Tibial artery (tissue), 4 donors: ENCODE measurements at regions of chr2 and their contacts with region 1.

Region 1: DNA sequence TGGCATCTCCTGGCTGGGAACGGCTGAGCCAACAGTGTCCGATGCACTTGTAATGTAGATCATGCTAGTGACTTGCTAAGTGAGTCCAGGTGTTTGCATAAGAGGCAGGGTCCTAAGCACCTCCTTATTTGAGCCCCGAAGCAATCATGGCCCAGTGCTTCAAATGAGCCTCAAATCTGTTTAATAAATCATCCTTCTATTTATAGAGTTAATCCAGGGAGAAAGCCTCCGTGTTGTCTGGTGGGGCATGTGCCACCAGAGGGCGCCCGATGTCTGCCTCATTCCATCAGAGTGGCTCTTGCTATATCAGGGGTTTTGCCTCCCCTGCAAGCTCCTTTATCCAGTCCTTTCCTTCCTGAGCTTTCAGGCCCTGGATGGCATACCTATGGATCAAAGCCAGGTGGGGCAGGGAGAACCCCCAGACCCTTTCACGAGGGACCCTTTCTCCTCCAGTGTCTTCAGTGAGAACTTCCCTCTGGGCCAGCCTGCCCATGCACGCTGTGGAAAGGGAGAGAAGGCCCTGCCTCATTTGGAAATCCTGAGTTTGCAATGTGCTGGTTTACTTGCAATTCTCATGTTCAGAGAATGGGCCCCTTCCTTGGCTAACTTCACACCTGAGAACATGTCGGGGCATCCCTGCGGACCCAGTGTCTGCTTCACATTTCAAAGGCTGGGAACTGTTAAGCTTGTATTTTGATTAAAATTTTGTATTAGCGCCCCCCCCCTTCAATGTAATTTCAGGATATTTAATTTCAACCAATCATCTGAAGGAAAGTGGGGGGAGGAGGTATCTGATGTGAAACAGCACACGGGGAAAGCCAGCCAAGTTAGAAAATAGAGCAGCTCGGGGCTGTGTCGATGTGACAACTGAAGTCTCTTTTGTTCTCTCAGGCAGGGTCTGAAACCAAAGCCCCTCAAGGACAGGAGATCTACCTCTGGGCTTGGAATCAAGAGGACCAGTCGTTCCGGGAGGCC is 39.7 kb downstream of the RDH14 start:
- DNase-seq: peak; percentile 88 to 93
- H3K4me3 ChIP-seq: no peak overlapping the region
- H3K27ac ChIP-seq: peak overlapping the region; percentile 70 to 76
- H3K4me1 ChIP-seq: peaks cover 0 to 39% (median 23%) of the 10 kb centered on the region in 4 donors
- H3K27me3 ChIP-seq: no peaks in the 10 kb centered on the region
- CTCF ChIP-seq: peak; percentile 92 to 93

Region 2: DNA sequence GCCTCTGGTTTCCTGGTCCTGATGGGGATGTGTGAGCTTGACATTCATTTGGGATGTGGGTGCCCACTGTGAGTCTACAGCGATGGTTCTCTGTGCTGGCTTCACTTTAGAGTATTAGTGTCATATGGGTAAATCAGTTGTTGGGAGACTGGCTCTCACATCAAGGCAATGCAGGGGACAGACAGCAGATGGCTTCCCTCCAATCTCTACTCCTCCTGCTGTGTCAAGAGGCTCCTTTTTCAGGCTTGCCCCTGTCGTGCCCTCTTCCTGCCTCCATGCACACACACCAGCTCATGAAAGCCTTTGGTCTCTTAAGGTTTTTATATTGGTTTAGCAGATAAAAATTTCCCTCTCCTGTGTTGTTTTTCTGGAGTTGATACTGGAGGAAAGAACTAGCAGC is 275.9 kb before region 1 on chr2:
- intact Hi-C with region 1: no loop called
- DNase-seq: no peak
- H3K4me3 ChIP-seq: no peak overlapping the region
- H3K27ac ChIP-seq: no peak overlapping the region
- H3K4me1 ChIP-seq: no peaks in the 10 kb centered on the region
- H3K27me3 ChIP-seq: no peaks in the 10 kb centered on the region
- CTCF ChIP-seq: no peak

Region 3: DNA sequence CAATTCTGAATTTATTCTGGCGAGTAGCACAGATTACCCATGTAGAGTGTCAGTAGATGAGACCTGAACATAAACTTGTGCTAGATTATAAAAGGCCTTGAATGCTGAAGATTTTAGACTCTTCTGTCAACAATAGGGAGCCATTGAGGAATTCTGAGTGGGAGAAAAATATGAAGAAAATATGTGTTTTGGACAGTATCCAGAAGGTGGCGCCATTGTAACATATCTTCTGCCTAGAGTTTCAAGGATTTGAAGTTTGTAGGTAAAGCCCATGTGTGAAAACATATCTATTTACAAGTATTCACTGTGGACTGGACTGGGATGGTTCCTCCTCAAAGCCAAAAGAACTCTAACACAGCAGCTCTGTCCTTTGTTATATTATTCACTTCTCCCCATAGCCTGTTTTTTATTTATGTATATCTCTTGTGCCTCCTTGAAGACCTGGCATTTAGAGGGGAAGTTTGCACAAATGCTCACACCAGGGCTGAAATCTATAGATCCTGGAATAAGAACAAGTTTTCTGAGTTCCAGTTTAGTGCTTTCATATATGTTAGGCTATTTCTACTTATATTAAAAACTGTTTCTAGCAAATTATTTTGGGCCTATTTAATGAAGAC is 85.2 kb before region 1 on chr2:
- intact Hi-C with region 1: loop called (anchors 5 kb)
- DNase-seq: no peak
- H3K4me3 ChIP-seq: no peak overlapping the region
- H3K27ac ChIP-seq: peak overlapping the region; percentile 16 to 63
- H3K4me1 ChIP-seq: peaks cover 0 to 30% (median 9%) of the 10 kb centered on the region in 4 donors
- H3K27me3 ChIP-seq: no peaks in the 10 kb centered on the region
- CTCF ChIP-seq: peak; percentile 65 to 71

Region 4: GRCh38 chr2:18741895-18742732 is 221.4 kb after region 1 on chr2:
- intact Hi-C with region 1: loop called (anchors 5 kb)
- DNase-seq: peak; percentile 31 to 77
- H3K4me3 ChIP-seq: no peak overlapping the region
- H3K27ac ChIP-seq: peak overlapping the region; percentile 10 to 61
- H3K4me1 ChIP-seq: peaks cover 0 to 15% (median 8%) of the 10 kb centered on the region in 4 donors
- H3K27me3 ChIP-seq: no peaks in the 10 kb centered on the region
- CTCF ChIP-seq: peak; percentile 48 to 53

Region 5: DNA sequence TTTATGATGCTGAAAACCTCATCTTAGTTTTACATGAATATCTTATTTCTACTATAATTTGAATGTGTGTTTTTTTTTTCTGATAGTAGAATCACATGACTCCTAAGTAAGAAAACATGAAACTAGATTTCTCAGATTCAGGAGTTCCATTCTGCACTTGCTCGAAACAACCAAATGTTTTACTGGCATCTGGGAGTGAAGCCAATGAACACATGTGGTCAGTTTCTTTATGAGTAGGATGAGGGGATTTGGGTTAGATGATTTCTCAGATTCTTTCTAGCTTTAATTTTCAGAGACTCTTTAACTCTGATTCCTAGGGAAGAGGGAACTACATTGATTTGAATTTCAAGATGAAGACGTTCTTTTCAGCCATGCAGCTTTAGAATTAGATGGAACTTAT is 293.6 kb after region 1 on chr2:
- intact Hi-C with region 1: no loop called
- DNase-seq: no peak
- H3K4me3 ChIP-seq: no peak overlapping the region
- H3K27ac ChIP-seq: no peak overlapping the region
- H3K4me1 ChIP-seq: no peaks in the 10 kb centered on the region
- H3K27me3 ChIP-seq: no peaks in the 10 kb centered on the region
- CTCF ChIP-seq: no peak

Region 6: DNA sequence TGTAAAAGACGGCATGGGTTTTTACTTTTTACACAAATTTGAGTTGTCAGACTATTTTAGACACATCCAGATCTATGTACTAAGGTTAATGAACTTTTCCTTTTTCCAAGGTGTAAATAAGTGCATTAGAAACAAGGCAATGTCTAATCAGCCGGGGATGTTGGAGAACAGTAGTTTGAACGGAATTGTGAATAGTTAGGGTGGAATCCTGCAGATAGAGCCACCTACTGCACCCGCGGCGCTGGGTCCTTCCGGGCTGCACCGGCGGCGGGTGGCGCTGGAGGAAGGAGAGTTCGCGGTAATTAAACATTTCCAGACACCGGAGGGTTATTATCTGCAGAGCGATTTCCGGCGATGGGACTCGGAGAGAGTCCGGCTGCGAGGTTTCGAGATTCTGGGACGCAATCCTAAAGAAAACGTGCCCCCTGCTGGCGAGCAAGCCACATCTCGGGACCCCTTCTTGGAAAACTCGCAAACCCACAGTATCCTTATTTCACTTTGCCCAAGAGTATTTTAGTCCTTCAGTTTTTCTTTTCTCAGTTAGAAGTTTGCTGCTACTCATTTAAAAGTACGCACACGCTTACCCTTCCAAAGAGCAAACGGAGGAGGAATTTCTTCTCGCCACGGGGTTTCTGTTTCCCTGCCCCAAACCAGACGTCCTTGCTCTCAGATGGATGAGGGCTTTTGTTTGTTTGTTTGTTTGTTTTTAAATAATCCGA is 842.2 kb after region 1 on chr2:
- intact Hi-C with region 1: loop called (anchors 5 kb)
- DNase-seq: peak; percentile 76 to 91
- H3K4me3 ChIP-seq: peak overlapping the region; percentile 57 to 60
- H3K27ac ChIP-seq: peak overlapping the region; percentile 55 to 93
- H3K4me1 ChIP-seq: peaks cover 0 to 30% (median 14%) of the 10 kb centered on the region in 4 donors
- H3K27me3 ChIP-seq: no peaks in the 10 kb centered on the region
- CTCF ChIP-seq: peak; percentile 79 to 80